Right lobe of liver (tissue), 6 donors: ENCODE measurements at regions of chr17 and their contacts with region 1.

Region 1: DNA sequence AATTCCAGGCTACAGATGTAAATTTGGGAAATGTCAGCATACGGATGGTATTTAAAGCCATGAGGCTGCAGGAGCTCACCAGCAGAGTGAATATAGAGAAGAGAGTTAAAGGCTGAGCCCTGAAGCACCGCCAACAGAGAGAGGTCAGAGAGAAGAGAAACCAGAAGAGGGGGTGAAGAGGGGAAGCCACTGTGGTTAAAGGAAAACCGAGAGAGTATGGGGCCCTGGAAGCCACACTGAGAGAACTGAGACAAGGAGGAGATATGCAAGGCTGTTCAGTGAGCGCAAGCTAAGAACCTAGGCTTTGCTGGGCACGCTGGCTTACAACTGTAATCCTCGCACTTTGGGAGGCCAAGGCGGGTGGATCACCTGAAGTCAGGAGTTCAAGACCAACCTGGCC is 24.6 kb downstream of the COPRS start:
- DNase-seq: peak in 1 of 3 donors; percentile 1
- ATAC-seq: peak in 2 of 4 donors; percentile 18 to 44
- H3K4me3 ChIP-seq: no peak overlapping the region
- H3K27ac ChIP-seq: no peak overlapping the region
- H3K4me1 ChIP-seq: no peaks in the 10 kb centered on the region
- H3K27me3 ChIP-seq: no peaks in the 10 kb centered on the region
- CTCF ChIP-seq: no peak
- POLR2A ChIP-seq: no peak

Region 2: DNA sequence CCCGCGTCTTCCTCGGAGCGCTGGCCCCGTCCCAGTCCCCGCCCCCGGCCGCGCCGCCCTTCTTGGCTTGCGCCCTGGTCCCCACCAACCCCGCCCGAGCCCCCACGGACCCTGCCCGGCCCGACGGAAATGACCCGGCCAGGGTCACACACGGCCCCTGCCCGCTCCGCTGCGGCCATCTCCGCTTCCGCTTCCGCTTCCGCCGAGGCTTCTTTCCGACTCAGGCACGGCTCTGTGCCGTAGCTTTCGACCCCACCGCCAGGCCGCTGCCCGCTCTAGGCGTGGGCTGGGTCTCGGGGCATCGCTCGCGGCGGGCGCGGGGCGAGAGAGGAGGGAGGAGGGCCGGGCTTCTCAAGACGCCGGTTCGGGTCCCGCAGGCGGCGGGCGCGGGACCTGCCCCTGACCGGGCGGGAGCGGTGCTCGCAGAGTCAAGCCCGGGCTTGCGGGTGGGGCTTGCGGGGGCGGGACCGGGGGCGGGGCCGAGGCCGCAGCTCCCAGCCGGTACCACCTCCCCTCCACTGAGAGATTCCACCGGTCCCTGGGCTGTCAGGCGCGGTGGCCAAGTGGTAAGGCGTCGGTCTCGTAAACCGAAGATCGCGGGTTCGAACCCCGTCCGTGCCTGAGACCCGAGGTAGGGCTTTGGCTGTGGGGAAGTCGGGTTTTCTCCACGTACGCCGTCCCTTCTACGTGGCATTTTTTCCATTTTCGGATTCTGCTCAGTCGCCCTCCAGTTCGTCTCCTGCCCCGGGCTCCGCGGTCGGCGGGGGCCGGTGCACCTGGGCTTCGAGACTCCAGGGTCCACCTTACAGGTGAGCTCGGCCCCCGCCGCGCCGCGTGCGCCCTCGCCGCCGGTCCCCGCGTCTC is 284.7 kb before region 1 on chr17:
- intact Hi-C with region 1: loop called in 1 of 2 experiments (anchors 10 kb)
- DNase-seq: peak; percentile 94 to 96 (median 94)
- ATAC-seq: peak; percentile 88 to 96 (median 94)
- H3K4me3 ChIP-seq: peak overlapping the region; percentile 80 to 97 (median 91)
- H3K27ac ChIP-seq: peak overlapping the region; percentile 88 to 92 (median 88)
- H3K4me1 ChIP-seq: peaks cover 0 to 6% (median 0%) of the 10 kb centered on the region in 4 donors
- H3K27me3 ChIP-seq: no peaks in the 10 kb centered on the region
- CTCF ChIP-seq: no peak
- POLR2A ChIP-seq: peak; percentile 59

Region 3: DNA sequence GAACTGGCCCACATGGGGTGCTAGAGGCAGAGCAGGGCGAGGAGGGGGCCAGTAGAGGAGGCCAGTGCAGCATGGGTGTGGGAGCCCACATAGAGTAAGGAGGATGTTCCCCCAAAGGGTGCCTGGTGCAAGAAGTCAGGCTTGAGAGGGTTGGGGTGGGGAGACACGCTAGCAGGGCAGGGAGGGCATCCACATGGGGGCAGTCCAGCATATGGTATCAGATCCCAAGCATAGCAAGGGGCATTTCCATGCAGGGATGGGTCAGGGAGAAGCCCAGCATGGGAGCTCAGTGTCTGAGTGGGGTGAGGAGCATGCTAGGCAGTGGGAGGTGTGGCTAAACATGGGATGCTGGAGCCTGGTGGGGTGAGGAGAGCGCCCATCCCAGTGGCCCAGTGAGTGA is 189.1 kb before region 1 on chr17:
- intact Hi-C with region 1: no loop called
- DNase-seq: no peak
- ATAC-seq: peak in 2 of 4 donors; percentile 54 to 56
- H3K4me3 ChIP-seq: no peak overlapping the region
- H3K27ac ChIP-seq: no peak overlapping the region
- H3K4me1 ChIP-seq: no peaks in the 10 kb centered on the region
- H3K27me3 ChIP-seq: no peaks in the 10 kb centered on the region
- CTCF ChIP-seq: no peak
- POLR2A ChIP-seq: no peak

Region 4: GRCh38 chr17:31690151-31690551 is 144.3 kb before region 1 on chr17:
- intact Hi-C with region 1: no loop called
- DNase-seq: no peak
- ATAC-seq: no peak
- H3K4me3 ChIP-seq: no peak overlapping the region
- H3K27ac ChIP-seq: no peak overlapping the region
- H3K4me1 ChIP-seq: no peaks in the 10 kb centered on the region
- H3K27me3 ChIP-seq: no peaks in the 10 kb centered on the region
- CTCF ChIP-seq: no peak
- POLR2A ChIP-seq: no peak